Caco-2 (cell line): ENCODE measurements at regions of chr16 and their contacts with region 1.

Region 1: DNA sequence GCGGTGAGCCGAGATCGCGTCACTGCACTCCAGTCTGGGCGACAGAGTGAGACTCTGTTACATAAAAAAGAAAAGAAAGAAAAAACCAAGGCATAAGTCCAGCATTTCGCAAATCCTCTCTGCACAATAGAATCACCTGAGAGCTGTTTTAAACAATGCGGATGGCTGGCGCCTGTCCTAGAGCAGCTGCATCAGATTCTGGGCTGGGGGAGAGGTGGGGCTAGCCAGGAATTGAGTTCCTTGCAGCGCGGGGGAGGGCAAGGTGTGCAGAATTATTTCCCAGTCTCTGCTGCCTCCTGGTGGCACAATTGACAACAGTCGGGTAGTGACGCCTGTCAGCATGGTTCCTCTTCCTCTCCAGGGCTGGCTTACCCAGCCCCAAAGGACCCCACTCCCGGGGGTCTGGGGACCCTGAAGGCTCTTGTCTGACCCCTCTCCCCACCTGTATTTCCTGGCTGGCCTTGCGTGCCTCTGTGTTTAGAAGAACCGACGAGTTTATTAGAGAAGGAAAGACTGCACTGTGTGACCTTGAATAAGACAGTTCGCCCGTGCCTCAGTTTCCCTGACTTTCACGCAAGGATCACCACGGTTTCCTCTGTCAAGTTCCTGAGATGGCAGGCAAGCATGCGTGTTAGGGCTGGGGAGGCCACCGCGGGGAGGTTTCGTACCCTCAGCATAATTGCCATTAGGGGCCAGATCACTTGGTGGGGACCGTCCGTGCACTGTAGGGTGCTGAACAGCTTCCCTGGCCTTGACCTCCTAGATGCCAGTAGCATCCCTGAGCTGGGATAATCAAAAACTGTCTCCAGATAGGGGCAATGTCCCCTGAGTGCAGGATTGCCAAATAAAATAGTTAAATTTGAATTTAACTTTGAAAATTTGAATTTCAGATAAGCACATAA is 41.0 kb upstream of the PLCG2 start:
- DNase-seq: peak; percentile 91 to 93
- H3K4me3 ChIP-seq: no peak overlapping the region
- H3K4me3 Mint-ChIP-seq: no peak overlapping the region
- H3K27ac Mint-ChIP-seq: no peak overlapping the region
- H3K4me1 ChIP-seq: peaks cover 10% of the 10 kb centered on the region; the same call in 1 of the 2 replicates
- H3K4me1 Mint-ChIP-seq: no peaks in the 10 kb centered on the region
- H3K27me3 ChIP-seq: no peaks in the 10 kb centered on the region
- H3K27me3 Mint-ChIP-seq: no peaks in the 10 kb centered on the region
- CTCF ChIP-seq: peak; percentile 87 to 92

Region 2: GRCh38 chr16:81006814-81007696 is 731.1 kb before region 1 on chr16 and contains the starts of genes CENPN and CMC2:
- CTCF ChIA-PET with region 1: no interaction called
- POLR2A ChIA-PET with region 1: no interaction called
- intact Hi-C with region 1: loop called (anchors 10 kb)
- DNase-seq: peak; percentile 99
- H3K4me3 ChIP-seq: peak within 1 kb of the TSS; percentile 85
- H3K4me3 Mint-ChIP-seq: peak within 1 kb of the TSS; percentile 94
- H3K27ac Mint-ChIP-seq: peak within 1 kb of the TSS; percentile 100
- H3K4me1 ChIP-seq: peaks cover 13% of the 10 kb centered on the region; the same call in 1 of the 2 replicates
- H3K4me1 Mint-ChIP-seq: peaks cover 7% of the 10 kb centered on the region
- H3K27me3 ChIP-seq: no peaks in the 10 kb centered on the region
- H3K27me3 Mint-ChIP-seq: no peaks in the 10 kb centered on the region
- CTCF ChIP-seq: no peak
- total RNA-seq, gene CENPN: 100 and 105 TPM in 2 replicates
- total RNA-seq, gene CMC2: 94.1 and 101 TPM in 2 replicates

Region 3: GRCh38 chr16:81204798-81205680 is 533.1 kb before region 1 on chr16:
- CTCF ChIA-PET with region 1: no interaction called
- POLR2A ChIA-PET with region 1: no interaction called
- intact Hi-C with region 1: loop called (anchors 5 kb)
- DNase-seq: peak in 1 of 2 experiments; percentile 55
- H3K4me3 ChIP-seq: no peak overlapping the region
- H3K4me3 Mint-ChIP-seq: no peak overlapping the region
- H3K27ac Mint-ChIP-seq: no peak overlapping the region
- H3K4me1 ChIP-seq: no peaks in the 10 kb centered on the region
- H3K4me1 Mint-ChIP-seq: peaks cover 6% of the 10 kb centered on the region
- H3K27me3 ChIP-seq: no peaks in the 10 kb centered on the region
- H3K27me3 Mint-ChIP-seq: peaks cover 2% of the 10 kb centered on the region
- CTCF ChIP-seq: peak; percentile 80

Region 4: DNA sequence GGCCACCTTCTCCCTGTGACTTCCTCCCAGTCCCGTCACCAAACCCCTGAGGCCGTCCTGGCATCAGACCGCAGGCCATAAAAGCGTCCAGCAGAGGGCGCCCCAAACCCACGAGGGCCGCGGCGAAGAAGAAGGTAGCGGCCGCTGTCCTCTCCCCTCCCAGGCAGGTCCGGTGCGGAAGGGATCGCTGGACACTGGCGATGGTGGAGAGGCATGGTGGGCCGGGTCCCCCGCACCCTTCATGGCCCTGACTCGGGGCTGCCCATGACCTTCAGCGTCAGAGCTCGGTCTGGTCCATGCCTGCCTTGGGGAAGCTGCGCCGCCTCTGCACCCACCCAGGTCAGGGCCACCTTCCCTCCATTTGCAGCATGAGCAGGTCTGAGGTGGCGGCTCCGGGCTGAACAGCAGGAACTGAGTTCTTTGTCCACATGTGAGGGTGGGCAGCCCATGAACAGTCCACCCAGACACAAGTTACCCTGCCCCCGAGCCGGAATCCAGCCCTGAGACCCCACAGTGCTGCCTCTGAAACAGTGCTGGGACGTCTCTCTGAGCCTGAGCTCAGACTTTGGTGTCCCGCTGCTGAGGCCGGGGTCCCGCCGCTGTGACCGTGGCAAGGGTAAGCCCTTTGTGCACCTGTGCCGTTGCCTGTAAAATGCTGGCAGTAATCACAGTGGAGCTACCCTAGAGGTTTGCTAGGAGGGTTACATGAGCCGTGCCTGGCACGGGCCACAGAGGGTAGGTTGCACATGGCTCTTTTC is 334.3 kb before region 1 on chr16:
- CTCF ChIA-PET with region 1: no interaction called
- POLR2A ChIA-PET with region 1: no interaction called
- intact Hi-C with region 1: loop called (anchors 1 kb)
- DNase-seq: peak; percentile 92 to 96
- H3K4me3 ChIP-seq: peak overlapping the region; percentile 34
- H3K4me3 Mint-ChIP-seq: peak overlapping the region; percentile 61
- H3K27ac Mint-ChIP-seq: peak overlapping the region; percentile 4
- H3K4me1 ChIP-seq: peaks cover 24% of the 10 kb centered on the region
- H3K4me1 Mint-ChIP-seq: peaks cover 19% of the 10 kb centered on the region
- H3K27me3 ChIP-seq: no peaks in the 10 kb centered on the region
- H3K27me3 Mint-ChIP-seq: no peaks in the 10 kb centered on the region
- CTCF ChIP-seq: peak; percentile 96 to 97

Region 5: GRCh38 chr16:81723098-81723723 is 14.9 kb before region 1 on chr16:
- CTCF ChIA-PET with region 1: interaction called, 6 read pairs
- POLR2A ChIA-PET with region 1: no interaction called
- intact Hi-C with region 1: loop called (anchors 1 kb)
- DNase-seq: peak; percentile 69 to 85
- H3K4me3 ChIP-seq: no peak overlapping the region
- H3K4me3 Mint-ChIP-seq: no peak overlapping the region
- H3K27ac Mint-ChIP-seq: no peak overlapping the region
- H3K4me1 ChIP-seq: peaks cover 6% of the 10 kb centered on the region; the same call in 1 of the 2 replicates
- H3K4me1 Mint-ChIP-seq: no peaks in the 10 kb centered on the region
- H3K27me3 ChIP-seq: no peaks in the 10 kb centered on the region
- H3K27me3 Mint-ChIP-seq: peaks cover 2% of the 10 kb centered on the region
- CTCF ChIP-seq: peak; percentile 58 to 78